GM12878 (cell line): ENCODE measurements at regions of chr4 and their contacts with region 1.

Region 1: DNA sequence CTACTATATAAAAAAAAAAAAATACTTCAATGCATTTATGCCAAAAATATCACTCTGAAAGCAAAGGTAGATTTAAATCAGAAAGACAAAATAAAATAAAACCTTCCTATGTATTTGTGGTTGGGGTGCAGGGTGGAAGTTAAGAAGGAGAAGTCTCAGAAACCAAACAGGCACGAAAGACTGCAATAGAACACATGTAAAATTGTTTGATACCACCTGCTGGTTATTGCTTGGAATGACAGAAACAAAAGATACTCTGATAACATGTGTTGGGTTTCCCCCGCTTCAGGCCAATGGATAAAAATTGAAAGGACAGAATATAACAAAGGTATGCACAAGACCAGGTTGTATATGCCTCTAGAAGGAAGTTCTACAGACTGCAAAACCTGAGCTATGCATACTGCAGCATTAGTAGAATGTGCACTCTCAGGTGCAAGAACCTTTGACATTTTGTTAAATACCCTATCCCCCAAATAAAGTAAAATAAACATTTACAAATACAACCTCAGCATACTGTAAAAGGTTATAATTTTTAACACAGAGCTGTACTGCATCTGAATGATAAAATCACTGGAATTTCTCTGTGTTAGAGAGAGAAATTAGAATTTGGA is 118.8 kb downstream of the GABRA2 start:
- DNase-seq: peak; percentile 4
- ATAC-seq: peak; percentile 84
- H3K4me3 ChIP-seq: no peak overlapping the region
- H3K27ac ChIP-seq: no peak overlapping the region
- H3K4me1 ChIP-seq: no peaks in the 10 kb centered on the region
- H3K27me3 ChIP-seq: no peaks in the 10 kb centered on the region
- CTCF ChIP-seq: peak; percentile 36 to 52 (median 49); a peak in 4 of 6 replicates
- EP300 ChIP-seq: no peak
- POLR2A ChIP-seq: no peak
- RAD21 ChIP-seq: peak; percentile 54

Region 2: DNA sequence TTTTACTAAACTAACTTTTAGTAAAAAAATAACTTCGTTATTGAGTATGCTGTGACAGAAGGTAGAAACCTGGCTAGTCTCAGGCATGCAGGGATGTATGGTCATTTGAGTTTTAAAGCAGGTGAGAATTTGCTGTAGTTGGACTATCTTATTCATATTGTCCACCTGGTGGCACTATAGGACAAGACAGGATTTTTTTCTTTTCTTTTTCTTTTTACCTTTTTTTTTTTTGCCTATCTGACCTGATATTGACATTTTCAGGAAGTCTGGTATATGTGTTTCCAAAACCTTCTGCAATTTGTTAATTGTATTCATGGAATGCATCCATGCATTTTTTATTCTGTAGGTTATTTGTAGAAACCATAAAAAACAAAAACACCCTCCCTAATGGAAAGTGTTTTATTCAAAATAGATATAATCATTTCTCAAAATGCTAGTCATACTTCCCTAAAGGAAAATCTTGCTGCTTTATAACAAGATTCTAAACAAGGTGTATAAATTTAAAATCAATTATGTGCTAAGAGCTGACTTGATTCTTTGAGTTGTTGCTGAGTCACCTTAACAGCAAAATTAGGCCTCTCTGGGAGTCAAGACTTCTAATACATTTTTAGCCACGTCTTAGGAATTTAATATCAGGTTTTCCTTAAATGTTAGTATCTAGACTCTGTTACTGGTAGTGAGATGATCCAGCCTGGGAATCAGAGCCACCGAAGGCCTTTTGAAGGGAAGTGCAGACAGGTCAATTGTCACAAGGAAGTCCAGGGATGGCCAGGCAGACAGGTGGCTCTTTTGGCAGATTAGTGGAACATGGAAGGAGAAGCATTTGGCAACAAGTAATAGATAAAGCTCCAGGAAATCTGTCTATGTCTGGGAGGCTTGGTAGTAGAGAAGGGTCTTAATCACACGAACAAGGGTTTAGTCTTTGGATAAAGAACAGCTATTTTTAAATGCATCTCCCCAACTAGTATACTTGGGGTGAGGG is 1343.4 kb before region 1 on chr4:
- CTCF ChIA-PET with region 1: interaction called, 9 read pairs
- POLR2A ChIA-PET with region 1: no interaction called
- RAD21 ChIA-PET with region 1: no interaction called
- SMC1A ChIA-PET with region 1: no interaction called
- in situ Hi-C with region 1: loop called (anchors 25 kb)
- intact Hi-C with region 1: loop called (anchors 2 kb)
- DNase-seq: no peak
- ATAC-seq: peak; percentile 66; the same call in 2 of the 3 replicates
- H3K4me3 ChIP-seq: no peak overlapping the region
- H3K27ac ChIP-seq: no peak overlapping the region
- H3K4me1 ChIP-seq: no peaks in the 10 kb centered on the region
- H3K27me3 ChIP-seq: no peaks in the 10 kb centered on the region
- CTCF ChIP-seq: peak; percentile 27 to 48 (median 30); a peak in 4 of 6 replicates
- EP300 ChIP-seq: no peak
- POLR2A ChIP-seq: no peak
- RAD21 ChIP-seq: peak; percentile 77

Region 3: DNA sequence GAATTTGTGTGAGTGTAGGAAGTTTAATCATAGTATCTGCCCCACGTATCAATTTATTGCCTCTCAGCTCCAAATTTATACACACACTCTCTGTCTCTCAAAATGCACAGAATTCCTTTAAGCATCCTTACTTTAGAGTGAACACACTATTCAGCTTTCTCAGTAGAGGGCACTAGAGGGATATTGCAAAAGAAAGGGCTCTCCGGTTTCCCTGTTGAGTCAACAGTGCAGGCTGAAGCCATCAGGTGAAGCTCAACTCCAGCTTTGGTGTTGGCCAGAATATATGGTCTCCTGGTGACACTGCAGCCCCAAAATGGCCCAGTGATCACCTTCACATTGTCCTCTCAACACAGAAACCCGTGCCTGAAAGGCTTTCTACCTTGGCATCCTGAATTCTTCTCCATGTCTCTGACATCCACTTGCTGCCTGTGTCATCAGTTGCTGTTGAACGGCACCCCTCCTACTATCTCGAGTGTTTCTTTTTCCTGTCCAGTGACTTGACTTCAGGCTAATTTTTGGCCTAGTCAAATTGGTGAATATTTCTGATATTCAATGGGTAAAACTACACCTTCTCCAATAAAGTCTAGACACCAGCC is 817.7 kb before region 1 on chr4:
- CTCF ChIA-PET with region 1: interaction called, 13 read pairs
- POLR2A ChIA-PET with region 1: no interaction called
- RAD21 ChIA-PET with region 1: interaction called, 4 read pairs
- SMC1A ChIA-PET with region 1: no interaction called
- in situ Hi-C with region 1: loop called (anchors 25 kb)
- intact Hi-C with region 1: loop called (anchors 5 kb)
- DNase-seq: no peak
- ATAC-seq: peak; percentile 87
- H3K4me3 ChIP-seq: no peak overlapping the region
- H3K27ac ChIP-seq: no peak overlapping the region
- H3K4me1 ChIP-seq: no peaks in the 10 kb centered on the region
- H3K27me3 ChIP-seq: no peaks in the 10 kb centered on the region
- CTCF ChIP-seq: peak; percentile 36 to 48 (median 47); a peak in 4 of 6 replicates
- EP300 ChIP-seq: no peak
- POLR2A ChIP-seq: no peak
- RAD21 ChIP-seq: peak; percentile 71